CD8-positive, alpha-beta T cell (primary cell): ENCODE measurements at regions of chr1 and their contacts with region 1.

Region 1: GRCh38 chr1:166910396-166910994 is 34.4 kb upstream of the TADA1 start:
- DNase-seq: peak; percentile 44 to 92 (median 75)
- ATAC-seq: peak; percentile 100
- H3K4me3 ChIP-seq: no peak overlapping the region
- H3K4me3 Mint-ChIP-seq: no peak overlapping the region
- H3K27ac ChIP-seq: no peak overlapping the region
- H3K27ac Mint-ChIP-seq: no peak overlapping the region
- H3K4me1 ChIP-seq: no peaks in the 10 kb centered on the region
- H3K4me1 Mint-ChIP-seq: peaks cover 2% of the 10 kb centered on the region
- H3K27me3 ChIP-seq: no peaks in the 10 kb centered on the region
- H3K27me3 Mint-ChIP-seq: peaks cover 5% of the 10 kb centered on the region
- CTCF ChIP-seq: peak; percentile 87

Region 2: GRCh38 chr1:166855558-166855957 is 54.9 kb before region 1 on chr1:
- CTCF ChIA-PET with region 1: no interaction called
- POLR2A ChIA-PET with region 1: no interaction called
- intact Hi-C with region 1: no loop called
- DNase-seq: no peak
- ATAC-seq: no peak
- H3K4me3 ChIP-seq: no peak overlapping the region
- H3K4me3 Mint-ChIP-seq: no peak overlapping the region
- H3K27ac ChIP-seq: no peak overlapping the region
- H3K27ac Mint-ChIP-seq: peak overlapping the region; percentile 33
- H3K4me1 ChIP-seq: no peaks in the 10 kb centered on the region
- H3K4me1 Mint-ChIP-seq: peaks cover 19% of the 10 kb centered on the region
- H3K27me3 ChIP-seq: no peaks in the 10 kb centered on the region
- H3K27me3 Mint-ChIP-seq: no peaks in the 10 kb centered on the region
- CTCF ChIP-seq: no peak

Region 3: DNA sequence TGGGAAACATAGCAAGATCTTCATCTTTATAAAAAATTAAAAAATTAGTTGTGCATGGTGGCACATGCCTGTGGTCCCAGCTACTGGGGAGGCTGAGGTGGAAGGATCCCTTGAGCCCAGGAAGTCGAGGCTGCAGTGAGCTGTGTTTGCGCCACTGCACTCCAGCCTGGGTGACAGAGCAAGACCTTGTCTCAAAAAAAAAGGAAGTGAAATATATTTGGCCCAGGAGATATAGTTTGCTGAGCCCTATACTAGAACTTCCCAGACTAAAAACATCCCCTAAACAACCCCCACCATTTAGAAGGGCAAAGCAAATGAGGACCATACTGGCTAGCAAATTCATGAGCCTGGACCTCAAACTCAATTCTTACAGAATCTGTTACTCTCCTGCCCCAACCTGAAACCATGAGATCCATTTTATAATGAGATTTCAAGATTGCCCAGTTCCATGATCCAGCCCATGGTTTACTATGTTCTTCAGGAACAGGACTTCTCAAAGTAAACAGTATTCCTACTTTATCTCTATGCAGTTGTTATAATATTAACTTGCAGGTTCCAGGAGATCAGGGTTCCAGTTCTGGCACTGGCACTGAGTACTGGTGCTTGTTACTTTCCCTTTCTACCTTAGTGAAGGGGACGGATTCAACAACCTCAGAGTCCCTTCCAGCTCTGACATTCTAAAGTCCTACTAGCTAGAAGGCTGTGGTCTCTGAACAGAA is 14.5 kb after region 1 on chr1:
- CTCF ChIA-PET with region 1: interaction called, 11 read pairs
- POLR2A ChIA-PET with region 1: no interaction called
- intact Hi-C with region 1: no loop called
- DNase-seq: no peak
- ATAC-seq: no peak
- H3K4me3 ChIP-seq: no peak overlapping the region
- H3K4me3 Mint-ChIP-seq: no peak overlapping the region
- H3K27ac ChIP-seq: no peak overlapping the region
- H3K27ac Mint-ChIP-seq: no peak overlapping the region
- H3K4me1 ChIP-seq: no peaks in the 10 kb centered on the region
- H3K4me1 Mint-ChIP-seq: peaks cover 5% of the 10 kb centered on the region
- H3K27me3 ChIP-seq: peaks cover 5 to 20% of the 10 kb centered on the region in 2 experiments
- H3K27me3 Mint-ChIP-seq: peaks cover 23% of the 10 kb centered on the region
- CTCF ChIP-seq: no peak

Region 4: DNA sequence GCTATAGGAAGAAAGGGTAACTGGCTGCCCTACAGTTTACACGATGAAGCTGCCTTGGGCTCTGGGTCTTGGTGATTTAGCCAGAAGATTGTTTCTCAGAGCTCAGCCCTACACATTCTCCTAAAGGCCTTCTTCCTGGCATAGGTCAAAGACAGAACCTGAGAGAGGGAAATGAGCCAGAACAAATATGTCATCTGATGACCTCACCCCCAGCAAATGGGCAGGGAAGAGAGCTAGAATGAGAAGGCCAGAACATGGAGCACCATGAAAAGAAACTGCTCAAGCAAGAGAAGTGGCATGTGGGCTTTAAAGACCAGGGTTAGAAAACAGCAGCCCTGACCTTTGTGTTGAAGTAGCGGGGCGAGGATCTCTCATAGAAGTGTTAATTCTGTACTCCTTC is 70.3 kb after region 1 on chr1:
- CTCF ChIA-PET with region 1: interaction called, 3 read pairs
- POLR2A ChIA-PET with region 1: no interaction called
- intact Hi-C with region 1: loop called in 1 of 2 experiments (anchors 5 kb)
- DNase-seq: no peak
- ATAC-seq: no peak
- H3K4me3 ChIP-seq: no peak overlapping the region
- H3K4me3 Mint-ChIP-seq: no peak overlapping the region
- H3K27ac ChIP-seq: no peak overlapping the region
- H3K27ac Mint-ChIP-seq: no peak overlapping the region
- H3K4me1 ChIP-seq: no peaks in the 10 kb centered on the region
- H3K4me1 Mint-ChIP-seq: peaks cover 5% of the 10 kb centered on the region
- H3K27me3 ChIP-seq: no peaks in the 10 kb centered on the region
- H3K27me3 Mint-ChIP-seq: peaks cover 10% of the 10 kb centered on the region
- CTCF ChIP-seq: no peak

Region 5: GRCh38 chr1:167059045-167059808 is 148.7 kb after region 1 on chr1:
- CTCF ChIA-PET with region 1: interaction called, 718 read pairs
- POLR2A ChIA-PET with region 1: interaction called, 27 read pairs
- intact Hi-C with region 1: loop called (anchors 1 kb)
- DNase-seq: peak; percentile 46 to 85 (median 74)
- ATAC-seq: peak; percentile 84
- H3K4me3 ChIP-seq: no peak overlapping the region
- H3K4me3 Mint-ChIP-seq: no peak overlapping the region
- H3K27ac ChIP-seq: no peak overlapping the region
- H3K27ac Mint-ChIP-seq: no peak overlapping the region
- H3K4me1 ChIP-seq: peaks cover 5% of the 10 kb centered on the region
- H3K4me1 Mint-ChIP-seq: peaks cover 6% of the 10 kb centered on the region
- H3K27me3 ChIP-seq: no peaks in the 10 kb centered on the region
- H3K27me3 Mint-ChIP-seq: no peaks in the 10 kb centered on the region
- CTCF ChIP-seq: peak; percentile 93

Region 6: DNA sequence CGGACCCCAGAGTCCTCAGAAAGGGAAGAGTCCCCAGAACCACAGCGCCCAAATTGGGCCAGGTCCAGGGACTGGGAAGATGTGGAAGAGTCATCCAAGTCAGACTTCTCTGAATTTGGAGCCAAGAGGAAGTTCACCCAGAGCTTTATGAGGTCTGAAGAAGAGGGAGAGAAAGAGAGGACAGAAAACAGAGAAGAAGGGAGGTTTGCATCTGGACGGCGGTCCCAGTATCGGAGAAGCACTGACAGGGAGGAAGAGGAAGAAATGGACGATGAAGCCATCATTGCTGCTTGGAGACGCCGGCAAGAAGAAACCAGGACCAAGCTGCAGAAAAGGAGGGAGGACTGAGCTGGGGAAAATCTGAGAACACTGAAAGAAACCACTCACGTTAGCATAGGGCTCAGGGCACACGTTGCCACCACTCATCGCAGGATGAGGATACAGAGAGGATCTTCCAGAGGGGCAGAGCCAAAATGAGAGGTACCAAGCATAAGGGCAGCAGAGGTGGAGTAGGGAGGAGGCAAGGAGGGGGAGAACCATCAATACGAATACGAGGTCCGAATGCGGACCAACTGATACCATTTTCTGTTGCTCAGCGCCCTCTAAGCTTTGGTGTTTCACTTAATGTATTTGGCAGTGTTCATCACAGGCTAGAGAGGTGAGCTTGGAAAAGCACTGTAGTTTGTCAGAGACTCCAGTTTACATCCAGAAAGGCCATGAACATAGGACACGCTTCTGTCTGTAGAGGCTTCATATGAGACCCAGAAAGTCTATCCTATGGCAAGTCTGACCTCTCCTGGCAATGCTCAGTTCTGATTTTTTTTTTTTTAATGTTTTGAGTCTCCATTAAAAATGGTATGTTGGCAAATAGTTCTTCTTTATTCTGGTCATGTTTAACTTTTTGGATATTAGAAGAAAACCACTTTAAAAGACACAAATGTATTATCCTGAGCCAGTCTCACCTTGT is 218.0 kb after region 1 on chr1:
- CTCF ChIA-PET with region 1: interaction called, 17 read pairs
- POLR2A ChIA-PET with region 1: no interaction called
- intact Hi-C with region 1: loop called (anchors 1 to 2 kb)
- DNase-seq: peak in 2 of 9 experiments; percentile 32 to 46
- ATAC-seq: peak; percentile 36
- H3K4me3 ChIP-seq: no peak overlapping the region
- H3K4me3 Mint-ChIP-seq: no peak overlapping the region
- H3K27ac ChIP-seq: no peak overlapping the region
- H3K27ac Mint-ChIP-seq: no peak overlapping the region
- H3K4me1 ChIP-seq: no peaks in the 10 kb centered on the region
- H3K4me1 Mint-ChIP-seq: no peaks in the 10 kb centered on the region
- H3K27me3 ChIP-seq: peaks cover 0 to 2% of the 10 kb centered on the region in 2 experiments
- H3K27me3 Mint-ChIP-seq: peaks cover 18% of the 10 kb centered on the region
- CTCF ChIP-seq: peak; percentile 41